Sciatic nerve (tissue), 2 donors: ENCODE measurements at regions of chr13 and their contacts with region 1.

Region 1: GRCh38 chr13:98466634-98467236 is 110.2 kb downstream of the STK24 start:
- DNase-seq: peak; percentile 32
- ATAC-seq: peak; percentile 45

Region 2: GRCh38 chr13:98576963-98577822 is 110.5 kb after region 1 on chr13 and contains the start of gene STK24:
- intact Hi-C with region 1: loop called (anchors 10 kb)
- DNase-seq: peak; percentile 78
- ATAC-seq: peak; percentile 81
- total RNA-seq, gene STK24: 44.2 TPM